Activated CD4-positive, alpha-beta T cell treated with anti-CD3 and anti-CD28 coated beads for 36 hours (primary cell): ENCODE measurements at regions of chr2 and their contacts with region 1.

Region 1: GRCh38 chr2:197813093-197813787 is 8.8 kb downstream of the PLCL1 start:
- DNase-seq: peak; percentile 32
- ATAC-seq: peak; percentile 65
- H3K4me3 Mint-ChIP-seq: no peak overlapping the region
- H3K27ac Mint-ChIP-seq: no peak overlapping the region
- H3K4me1 Mint-ChIP-seq: peaks cover 66% of the 10 kb centered on the region
- H3K27me3 Mint-ChIP-seq: no peaks in the 10 kb centered on the region

Region 2: DNA sequence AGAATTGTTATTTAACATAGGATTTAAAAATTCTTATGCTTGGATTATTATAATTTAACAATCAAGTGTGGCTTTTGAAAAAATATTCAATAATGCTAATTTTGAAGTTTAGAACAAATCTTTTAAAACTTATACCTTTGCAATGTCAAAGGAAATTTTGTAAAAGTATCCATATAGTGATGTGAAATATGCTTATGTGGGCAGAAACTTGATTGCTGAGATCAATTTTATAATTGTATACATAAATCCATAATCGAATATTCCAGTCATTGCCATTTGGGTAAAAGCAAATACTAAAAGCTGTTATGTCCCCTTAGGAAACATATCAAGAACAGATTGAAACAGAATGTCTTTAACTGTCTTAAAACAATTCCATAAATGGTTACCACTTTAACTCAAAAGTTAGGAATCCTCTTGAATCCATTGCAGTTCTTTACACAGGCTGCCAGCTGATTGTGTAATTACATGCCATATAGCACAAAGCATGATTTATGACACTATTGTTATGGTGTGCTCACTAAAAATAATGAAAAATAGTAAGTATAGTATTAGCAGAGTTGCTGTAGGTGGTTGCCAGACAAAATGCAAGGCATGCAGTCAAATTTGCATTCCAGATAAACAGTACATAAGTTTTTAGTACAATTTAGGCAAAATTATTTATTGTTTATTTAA is 15.4 kb after region 1 on chr2:
- CTCF ChIA-PET with region 1: interaction called, 16 read pairs
- POLR2A ChIA-PET with region 1: no interaction called
- intact Hi-C with region 1: no loop called
- DNase-seq: no peak
- ATAC-seq: no peak
- H3K4me3 Mint-ChIP-seq: no peak overlapping the region
- H3K27ac Mint-ChIP-seq: no peak overlapping the region
- H3K4me1 Mint-ChIP-seq: peaks cover 8% of the 10 kb centered on the region
- H3K27me3 Mint-ChIP-seq: no peaks in the 10 kb centered on the region